WTC11 (cell line): ENCODE measurements at regions of chr16 and their contacts with region 1.

Region 1: GRCh38 chr16:82368041-82368440 is 198.0 kb upstream of the MPHOSPH6 start:
- DNase-seq: peak; percentile 46
- ATAC-seq: peak; percentile 85
- H3K4me3 Mint-ChIP-seq: no peak overlapping the region
- H3K27ac Mint-ChIP-seq: no peak overlapping the region
- H3K4me1 Mint-ChIP-seq: no peaks in the 10 kb centered on the region
- H3K27me3 Mint-ChIP-seq: no peaks in the 10 kb centered on the region; the same call in 1 of the 2 replicates
- CTCF ChIP-seq: no peak

Region 2: DNA sequence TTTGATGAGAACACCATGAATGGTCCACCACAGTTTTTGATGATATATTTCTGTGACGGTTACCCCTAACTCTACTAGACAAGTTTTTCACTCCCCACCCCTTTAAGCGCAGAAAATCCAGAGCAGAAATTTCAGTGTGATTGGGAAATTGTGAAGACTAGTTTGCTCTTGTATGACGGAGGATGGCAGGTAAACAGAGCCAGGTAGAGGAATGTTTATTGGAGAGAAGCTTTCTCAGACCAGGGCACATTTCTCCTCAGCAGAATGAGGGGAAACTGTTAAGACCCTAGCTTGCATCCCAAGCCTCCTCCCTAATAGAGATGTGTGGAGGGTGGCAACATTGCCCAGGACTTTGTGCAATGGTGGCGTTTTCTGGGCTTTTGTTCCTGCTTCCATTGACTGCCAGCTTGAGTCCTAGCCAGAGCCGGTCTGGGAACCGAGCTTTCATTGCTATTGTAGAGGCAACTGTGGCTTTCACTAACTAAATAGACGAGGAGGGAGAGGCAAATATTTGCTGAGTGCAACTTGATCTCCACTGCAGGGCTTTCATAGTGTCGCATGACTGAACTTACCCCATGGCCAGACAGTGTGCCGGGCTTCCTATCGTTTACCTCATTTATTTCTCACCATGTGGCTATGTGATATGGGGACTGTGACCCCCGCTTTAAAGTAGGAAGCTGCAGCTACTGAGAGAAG is 38.4 kb before region 1 on chr16:
- CTCF ChIA-PET with region 1: no interaction called
- POLR2A ChIA-PET with region 1: no interaction called
- DNase-seq: no peak
- ATAC-seq: peak; percentile 73
- H3K4me3 Mint-ChIP-seq: no peak overlapping the region
- H3K27ac Mint-ChIP-seq: no peak overlapping the region
- H3K4me1 Mint-ChIP-seq: peaks cover 7% of the 10 kb centered on the region; the same call in 1 of the 2 replicates
- H3K27me3 Mint-ChIP-seq: no peaks in the 10 kb centered on the region
- CTCF ChIP-seq: no peak

Region 3: DNA sequence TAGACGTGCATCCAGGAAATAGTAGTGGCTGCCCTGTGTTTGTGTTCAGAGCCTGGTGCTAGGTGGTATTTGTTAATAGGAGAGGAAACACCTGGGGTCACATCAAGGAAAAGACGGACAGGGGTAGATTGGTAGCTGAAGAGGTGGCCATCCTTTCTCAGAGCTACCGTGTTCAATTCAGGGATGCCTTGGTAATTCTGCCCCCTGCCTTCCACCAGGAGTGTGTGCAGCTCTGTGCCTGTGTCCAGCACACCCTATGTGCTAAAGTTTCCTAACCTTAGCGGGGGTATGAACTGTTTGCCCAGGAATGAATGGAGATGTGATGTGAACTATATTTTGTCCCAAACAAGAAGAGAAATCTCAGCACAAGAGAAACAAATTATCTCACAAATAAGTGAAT is 23.9 kb before region 1 on chr16:
- CTCF ChIA-PET with region 1: interaction called, 16 read pairs
- POLR2A ChIA-PET with region 1: no interaction called
- DNase-seq: peak; percentile 27
- ATAC-seq: peak; percentile 89
- H3K4me3 Mint-ChIP-seq: no peak overlapping the region
- H3K27ac Mint-ChIP-seq: no peak overlapping the region
- H3K4me1 Mint-ChIP-seq: peaks cover 25% of the 10 kb centered on the region
- H3K27me3 Mint-ChIP-seq: no peaks in the 10 kb centered on the region
- CTCF ChIP-seq: peak; percentile 33; the same call in 1 of the 2 replicates

Region 4: GRCh38 chr16:82488460-82488859 is 120.4 kb after region 1 on chr16:
- CTCF ChIA-PET with region 1: no interaction called
- POLR2A ChIA-PET with region 1: no interaction called
- DNase-seq: no peak
- ATAC-seq: no peak
- H3K4me3 Mint-ChIP-seq: no peak overlapping the region
- H3K27ac Mint-ChIP-seq: no peak overlapping the region
- H3K4me1 Mint-ChIP-seq: no peaks in the 10 kb centered on the region
- H3K27me3 Mint-ChIP-seq: no peaks in the 10 kb centered on the region
- CTCF ChIP-seq: no peak